ENCODE measurements at regions of chr9 and their contacts with region 1.

Region 1: GRCh38 chr9:27771803-27772545 is 198.7 kb upstream of the C9orf72 start:
- DNase-seq: no peak
- ATAC-seq: no peak
- H3K4me3 Mint-ChIP-seq: no peak overlapping the region
- H3K27ac Mint-ChIP-seq: no peak overlapping the region
- H3K4me1 Mint-ChIP-seq: no peaks in the 10 kb centered on the region
- H3K27me3 Mint-ChIP-seq: no peaks in the 10 kb centered on the region

Region 2: DNA sequence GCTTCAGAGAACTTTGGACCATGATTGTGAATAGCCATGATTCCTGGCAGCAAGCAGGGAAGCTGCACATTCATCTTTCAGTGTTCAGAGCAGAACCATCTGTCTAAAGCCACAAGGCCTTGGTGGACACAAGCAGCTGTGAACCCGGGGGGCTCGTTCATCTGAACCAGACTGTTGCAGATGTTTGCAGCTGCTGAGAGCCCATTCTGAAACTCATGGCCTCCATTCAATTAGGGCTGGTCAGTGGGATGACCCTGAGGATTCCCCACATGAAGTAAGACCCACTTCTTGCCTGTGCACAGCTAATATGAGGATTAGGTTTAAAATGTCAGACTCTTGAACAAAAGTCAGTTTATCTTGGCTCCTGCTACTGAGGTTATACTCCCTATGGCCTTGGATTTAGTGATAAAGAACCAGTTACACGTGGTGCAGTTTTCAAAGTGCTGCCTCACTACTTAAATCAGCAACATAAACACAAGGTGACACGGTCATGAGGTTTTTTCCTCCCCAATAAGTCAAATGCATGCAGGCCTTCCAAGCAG is 357.7 kb before region 1 on chr9:
- CTCF ChIA-PET with region 1: no interaction called
- POLR2A ChIA-PET with region 1: no interaction called
- intact Hi-C with region 1: no loop called
- DNase-seq: no peak
- ATAC-seq: no peak
- H3K4me3 Mint-ChIP-seq: no peak overlapping the region
- H3K27ac Mint-ChIP-seq: no peak overlapping the region
- H3K4me1 Mint-ChIP-seq: no peaks in the 10 kb centered on the region
- H3K27me3 Mint-ChIP-seq: peaks cover 4% of the 10 kb centered on the region

Region 3: GRCh38 chr9:27586304-27586703 is 185.7 kb before region 1 on chr9:
- CTCF ChIA-PET with region 1: no interaction called
- POLR2A ChIA-PET with region 1: no interaction called
- intact Hi-C with region 1: loop called in 1 of 2 experiments (anchors 10 kb)
- DNase-seq: no peak
- ATAC-seq: no peak
- H3K4me3 Mint-ChIP-seq: no peak overlapping the region
- H3K27ac Mint-ChIP-seq: no peak overlapping the region
- H3K4me1 Mint-ChIP-seq: no peaks in the 10 kb centered on the region
- H3K27me3 Mint-ChIP-seq: peaks cover 21% of the 10 kb centered on the region

Region 4: GRCh38 chr9:27732494-27732893 is 39.5 kb before region 1 on chr9:
- CTCF ChIA-PET with region 1: no interaction called
- POLR2A ChIA-PET with region 1: no interaction called
- intact Hi-C with region 1: loop called in 1 of 2 experiments (anchors 1 kb)
- DNase-seq: peak; percentile 13
- ATAC-seq: peak; percentile 70
- H3K4me3 Mint-ChIP-seq: no peak overlapping the region
- H3K27ac Mint-ChIP-seq: no peak overlapping the region
- H3K4me1 Mint-ChIP-seq: peaks cover 7% of the 10 kb centered on the region
- H3K27me3 Mint-ChIP-seq: peaks cover 4% of the 10 kb centered on the region